ENCODE measurements at regions of chr5 and their contacts with region 1.

Region 1: DNA sequence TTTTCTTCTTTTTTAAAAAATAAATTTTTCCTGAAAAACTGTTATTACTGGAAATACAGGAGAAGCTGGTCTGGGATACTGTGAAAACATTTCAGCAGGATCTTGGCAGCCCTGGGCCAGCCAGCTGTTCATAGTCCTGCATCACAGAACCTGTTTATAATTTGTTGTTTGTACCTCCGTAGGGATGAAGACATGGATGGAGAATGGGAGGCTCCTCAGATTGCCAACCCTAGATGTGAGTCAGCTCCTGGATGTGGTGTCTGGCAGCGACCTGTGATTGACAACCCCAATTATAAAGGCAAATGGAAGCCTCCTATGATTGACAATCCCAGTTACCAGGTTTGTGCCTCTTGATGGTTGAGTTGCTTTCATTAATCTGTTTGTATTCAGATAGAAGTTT is 12.4 kb upstream of the MAML1 start:
- DNase-seq: no peak
- ATAC-seq: no peak

Region 2: DNA sequence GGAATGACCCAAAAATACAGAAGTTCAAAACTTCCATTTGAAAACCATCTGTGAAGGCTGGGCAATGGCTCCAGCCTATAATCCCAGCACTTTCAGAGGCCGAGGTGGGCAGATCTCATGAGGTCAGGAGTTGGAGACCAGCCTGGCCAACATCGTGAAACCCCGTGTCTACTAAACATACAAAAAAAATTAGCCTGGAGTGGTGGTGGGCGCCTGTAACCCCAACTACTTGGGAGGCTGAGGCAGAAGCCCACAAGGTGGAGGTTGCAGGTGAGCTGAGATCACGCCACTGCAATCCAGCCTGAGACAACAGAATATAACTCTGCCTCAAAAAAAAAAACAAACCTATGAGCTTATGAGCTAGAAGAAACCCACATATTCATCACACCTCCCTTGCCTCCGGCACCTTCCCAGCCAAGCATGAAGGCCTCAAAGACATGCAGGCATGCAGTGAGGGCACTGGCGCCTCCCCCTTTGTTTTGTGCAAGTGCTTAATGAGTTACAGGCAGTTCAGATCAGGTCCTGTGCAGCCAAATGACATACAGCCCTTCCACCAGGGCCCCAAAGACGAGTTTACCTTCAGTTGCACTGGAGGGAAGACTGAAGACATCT is 106.7 kb before region 1 on chr5:
- intact Hi-C with region 1: loop called (anchors 10 kb)
- DNase-seq: no peak
- ATAC-seq: no peak

Region 3: DNA sequence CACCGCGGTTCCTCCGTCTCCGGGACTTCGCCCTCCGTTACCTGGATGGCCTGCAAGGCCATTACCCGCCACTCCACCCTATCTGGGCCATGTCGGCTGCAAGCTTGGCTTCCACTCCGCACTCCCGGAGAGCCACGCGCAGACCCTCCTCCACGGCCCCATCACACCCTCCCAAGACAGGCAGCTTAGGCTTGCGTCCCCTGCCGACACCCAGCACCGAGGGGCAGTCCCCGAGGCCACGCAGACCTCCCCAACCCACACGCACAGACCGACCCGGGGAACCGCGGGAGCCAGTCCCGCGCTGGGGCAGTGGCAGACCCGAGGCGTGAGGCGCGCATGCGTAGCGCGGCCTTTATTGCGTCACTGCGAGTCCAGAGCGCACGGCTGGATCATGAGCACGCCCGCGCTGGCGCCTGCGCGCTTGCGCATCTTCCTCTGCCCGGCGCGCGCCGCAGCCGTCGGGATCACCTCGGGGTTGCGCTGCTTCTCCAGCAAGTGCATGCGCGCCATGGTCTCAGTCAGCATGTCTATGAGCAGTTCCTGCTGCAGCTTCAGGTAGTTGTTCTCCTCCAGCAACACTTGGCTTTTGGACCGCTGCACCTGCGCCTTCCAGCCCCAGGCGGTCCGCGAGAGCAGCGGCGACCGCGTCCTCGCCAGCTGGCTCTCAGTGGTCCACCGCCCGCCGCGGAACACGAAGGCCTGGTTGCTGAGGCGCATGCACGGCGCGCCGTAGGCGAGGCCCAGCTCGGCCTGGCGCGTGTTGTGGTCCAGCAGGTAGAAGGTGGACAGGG is 41.8 kb before region 1 on chr5:
- intact Hi-C with region 1: no loop called
- DNase-seq: peak; percentile 98
- ATAC-seq: peak; percentile 99

Measured in Right ventricle myocardium superior (tissue), 1 donor.